ENCODE measurements at regions of chr6 and their contacts with region 1.

Region 1: DNA sequence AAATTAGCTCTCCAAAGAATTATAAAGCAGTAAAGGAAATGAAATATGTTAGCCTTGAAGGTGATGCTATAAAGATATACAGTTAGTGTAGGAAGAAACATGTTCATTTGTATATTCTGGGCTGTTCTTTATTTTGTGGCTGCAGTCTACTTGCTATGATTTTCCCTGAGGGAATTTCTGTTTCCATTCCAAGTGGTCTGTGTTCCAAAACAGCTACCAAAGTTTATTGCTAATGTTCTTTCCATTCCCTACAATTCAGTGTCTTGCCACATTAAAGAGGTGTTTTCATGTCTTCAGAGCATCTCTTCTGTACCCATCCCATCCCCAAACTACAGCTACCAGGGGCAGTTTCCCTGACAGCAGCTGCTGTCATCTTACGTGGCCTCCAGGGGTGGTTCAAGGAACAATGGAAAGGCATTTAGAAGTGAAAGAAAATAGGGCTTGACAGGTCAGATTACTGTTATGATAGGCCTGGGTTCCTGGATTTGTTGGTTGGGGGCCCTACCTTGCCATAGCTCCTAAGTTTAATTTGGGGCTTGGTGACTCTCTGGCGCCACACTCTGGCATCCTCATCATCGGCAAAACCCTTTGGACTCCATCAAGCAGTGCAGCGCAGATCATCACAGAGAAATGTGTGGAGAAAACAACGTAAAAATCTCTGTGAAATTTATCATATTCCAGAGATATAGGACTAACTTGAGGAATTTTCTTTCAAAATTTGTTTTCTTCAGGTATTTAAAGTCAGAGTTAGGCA is 33.8 kb upstream of the AIG1 start:
- H3K4me3 Mint-ChIP-seq: no peak overlapping the region
- H3K27ac Mint-ChIP-seq: no peak overlapping the region
- H3K4me1 Mint-ChIP-seq: peaks cover 4% of the 10 kb centered on the region
- H3K27me3 Mint-ChIP-seq: no peaks in the 10 kb centered on the region

Region 2: GRCh38 chr6:142474531-142475289 is 552.2 kb before region 1 on chr6:
- intact Hi-C with region 1: loop called (anchors 10 kb)
- H3K4me3 Mint-ChIP-seq: no peak overlapping the region
- H3K27ac Mint-ChIP-seq: no peak overlapping the region
- H3K4me1 Mint-ChIP-seq: no peaks in the 10 kb centered on the region
- H3K27me3 Mint-ChIP-seq: no peaks in the 10 kb centered on the region

Region 3: DNA sequence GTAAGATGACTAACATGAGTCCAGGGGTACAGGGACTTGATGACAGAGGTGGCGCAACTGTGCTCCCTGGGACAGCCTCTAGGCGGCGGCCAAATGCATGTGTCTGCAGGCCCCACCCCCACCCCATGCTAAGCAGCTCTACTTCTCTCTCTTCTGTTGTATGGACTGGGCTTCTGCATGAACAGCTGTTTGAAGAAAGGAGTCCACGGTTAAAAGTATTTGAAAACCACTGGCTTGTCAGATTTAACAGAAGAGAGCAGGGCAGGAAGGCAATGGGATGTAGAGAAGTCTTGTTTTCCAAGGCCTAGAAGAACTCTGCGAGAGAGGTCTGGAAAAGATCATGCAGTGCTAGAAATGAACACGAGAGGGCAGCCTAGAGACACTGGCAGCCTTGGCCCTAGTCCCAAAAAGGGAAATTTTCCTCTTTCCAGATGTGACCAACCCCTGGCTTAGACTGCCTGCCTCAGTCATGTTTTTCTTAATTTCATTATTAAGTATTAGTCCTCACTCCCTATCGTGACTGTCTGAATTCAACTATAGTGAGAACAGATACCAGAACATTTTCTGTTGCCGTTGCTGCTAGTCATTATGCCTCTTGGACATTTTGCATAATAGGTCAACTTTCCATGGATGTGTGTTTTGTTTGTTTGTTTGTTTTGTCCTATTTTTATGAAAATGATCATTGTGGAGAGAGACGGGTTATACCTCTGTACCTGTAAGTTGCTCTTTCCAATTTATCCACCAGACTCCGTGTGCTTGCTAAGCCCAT is 460.1 kb before region 1 on chr6:
- intact Hi-C with region 1: loop called (anchors 10 kb)
- H3K4me3 Mint-ChIP-seq: no peak overlapping the region
- H3K27ac Mint-ChIP-seq: no peak overlapping the region
- H3K4me1 Mint-ChIP-seq: no peaks in the 10 kb centered on the region
- H3K27me3 Mint-ChIP-seq: no peaks in the 10 kb centered on the region

Region 4: DNA sequence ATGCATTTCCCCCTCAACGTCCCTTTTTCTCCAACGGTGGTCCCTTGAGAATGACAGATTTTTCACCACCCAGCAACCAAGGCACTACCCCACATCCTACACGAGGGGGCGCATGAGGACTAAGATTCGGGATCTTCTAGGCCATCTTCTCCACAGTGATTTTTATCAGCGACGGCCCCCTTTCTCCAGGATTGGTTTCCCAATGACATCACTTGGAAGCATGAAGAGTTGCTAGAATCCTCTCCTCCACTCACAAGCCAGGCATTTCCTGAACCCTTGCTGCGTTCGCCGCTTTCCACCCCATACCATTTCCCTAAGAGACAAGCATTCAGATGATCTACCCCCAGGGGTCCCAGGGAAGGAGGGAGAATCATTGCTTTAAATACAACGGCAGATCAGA is 333.9 kb before region 1 on chr6:
- intact Hi-C with region 1: loop called (anchors 2 kb)
- H3K4me3 Mint-ChIP-seq: no peak overlapping the region
- H3K27ac Mint-ChIP-seq: no peak overlapping the region
- H3K4me1 Mint-ChIP-seq: peaks cover 33% of the 10 kb centered on the region
- H3K27me3 Mint-ChIP-seq: peaks cover 7% of the 10 kb centered on the region

Region 5: GRCh38 chr6:142913511-142914047 is 113.3 kb before region 1 on chr6:
- intact Hi-C with region 1: loop called (anchors 10 kb)
- H3K4me3 Mint-ChIP-seq: peak overlapping the region; percentile 43
- H3K27ac Mint-ChIP-seq: no peak overlapping the region
- H3K4me1 Mint-ChIP-seq: peaks cover 24% of the 10 kb centered on the region
- H3K27me3 Mint-ChIP-seq: peaks cover 3% of the 10 kb centered on the region

Region 6: DNA sequence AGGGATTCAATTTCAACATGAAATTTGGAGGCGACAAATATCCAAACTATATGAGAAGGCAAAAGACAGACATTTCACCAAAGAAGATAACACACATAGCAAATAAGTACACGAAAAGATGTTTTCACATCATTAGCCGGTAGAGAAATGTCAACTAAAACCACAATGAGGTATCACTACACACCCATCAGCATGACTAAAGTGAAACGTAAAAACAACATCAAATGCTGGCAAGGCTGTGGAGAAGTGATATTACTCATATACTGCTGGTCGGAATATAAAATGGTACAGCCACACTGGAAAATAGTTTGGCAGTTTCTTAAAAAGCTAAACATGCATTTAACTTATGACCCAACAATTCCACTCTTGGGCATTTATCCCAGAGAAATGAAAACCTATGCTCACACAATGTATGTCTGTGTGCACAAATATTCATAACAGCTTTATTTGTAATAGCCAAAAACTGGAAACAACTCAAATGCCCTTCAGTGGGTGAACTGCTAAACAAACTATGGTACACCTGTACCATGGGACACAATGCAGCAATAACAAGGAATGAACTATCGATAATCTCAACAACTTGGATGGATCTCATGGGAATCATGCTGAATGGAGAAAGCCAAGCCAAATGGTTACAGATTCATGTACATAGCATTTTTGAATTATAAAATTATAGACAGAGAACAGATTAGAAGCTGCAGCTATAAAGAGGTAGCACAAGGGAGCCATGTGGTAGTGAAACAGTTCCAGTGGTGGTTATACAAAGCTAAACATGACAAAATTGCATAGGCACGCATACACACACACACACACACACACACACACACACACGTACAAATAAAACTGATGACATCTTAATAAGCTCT is 415.0 kb after region 1 on chr6:
- intact Hi-C with region 1: no loop called
- H3K4me3 Mint-ChIP-seq: no peak overlapping the region
- H3K27ac Mint-ChIP-seq: no peak overlapping the region
- H3K4me1 Mint-ChIP-seq: no peaks in the 10 kb centered on the region
- H3K27me3 Mint-ChIP-seq: no peaks in the 10 kb centered on the region